GM13977 (cell line): ENCODE measurements at regions of chr2 and their contacts with region 1.

Region 1: DNA sequence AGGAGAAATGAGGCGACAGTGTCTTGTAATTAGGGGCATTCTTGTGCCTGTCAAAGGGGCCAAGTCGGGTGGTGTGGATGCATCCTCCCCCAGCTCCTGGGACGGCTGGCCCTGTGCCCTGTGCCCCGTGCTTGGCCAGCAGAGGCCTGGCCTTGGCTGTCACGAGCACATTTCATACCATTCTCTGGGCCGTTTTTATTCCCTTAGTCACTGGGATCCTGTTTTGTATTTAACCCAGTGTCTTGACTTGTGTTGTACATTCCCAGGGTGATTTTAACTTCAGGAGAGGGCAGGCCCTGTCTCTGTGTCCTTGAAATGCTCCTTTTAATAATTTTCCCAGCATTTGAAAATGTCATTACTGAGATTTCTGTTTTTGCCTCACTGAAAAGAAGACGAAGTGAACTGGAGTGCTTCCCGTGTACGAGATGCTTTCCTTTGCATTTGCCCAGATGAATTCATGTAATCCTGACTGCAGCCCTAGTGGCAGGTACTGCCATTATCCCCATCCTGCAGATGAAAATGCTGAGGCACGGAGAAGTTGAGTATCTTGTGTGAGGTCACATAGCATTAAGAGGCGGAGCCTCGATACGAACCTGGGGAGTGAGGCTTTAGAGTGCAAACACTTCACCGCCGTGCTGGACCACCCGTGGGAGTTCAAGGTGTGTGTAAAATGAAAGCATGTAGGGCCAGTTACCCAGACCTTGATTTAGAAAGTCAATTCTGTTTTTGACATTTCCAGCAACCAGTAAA is 57.0 kb downstream of the SH3RF3 start:
- DNase-seq: no peak
- CTCF ChIP-seq: no peak

Region 2: DNA sequence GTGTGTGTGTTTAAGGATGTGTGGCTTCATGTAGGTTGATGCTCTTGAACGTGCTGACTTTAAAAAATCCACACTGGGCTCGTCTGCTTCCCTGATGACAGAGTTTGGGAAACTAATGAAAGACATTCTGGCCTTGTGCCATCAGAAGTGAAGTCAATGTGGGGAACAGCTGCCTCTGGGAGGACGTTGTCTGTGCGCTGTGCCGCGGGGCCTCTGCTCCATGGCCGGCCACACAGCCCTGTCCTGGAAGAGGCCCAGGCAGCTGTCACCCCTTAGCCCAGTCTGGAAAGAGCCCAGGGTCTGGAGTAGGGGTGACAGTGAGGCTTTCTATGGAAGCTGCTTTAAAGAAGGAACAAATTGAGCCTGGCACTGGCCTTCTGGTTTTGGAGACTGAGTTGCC is 98.8 kb after region 1 on chr2:
- in situ Hi-C with region 1: loop called (anchors 25 kb)
- DNase-seq: no peak
- CTCF ChIP-seq: no peak

Region 3: GRCh38 chr2:109356324-109357035 is 170.5 kb after region 1 on chr2:
- in situ Hi-C with region 1: no loop called
- DNase-seq: no peak
- CTCF ChIP-seq: no peak